T-cell (primary cell): ENCODE measurements at regions of chr14 and their contacts with region 1.

Region 1: DNA sequence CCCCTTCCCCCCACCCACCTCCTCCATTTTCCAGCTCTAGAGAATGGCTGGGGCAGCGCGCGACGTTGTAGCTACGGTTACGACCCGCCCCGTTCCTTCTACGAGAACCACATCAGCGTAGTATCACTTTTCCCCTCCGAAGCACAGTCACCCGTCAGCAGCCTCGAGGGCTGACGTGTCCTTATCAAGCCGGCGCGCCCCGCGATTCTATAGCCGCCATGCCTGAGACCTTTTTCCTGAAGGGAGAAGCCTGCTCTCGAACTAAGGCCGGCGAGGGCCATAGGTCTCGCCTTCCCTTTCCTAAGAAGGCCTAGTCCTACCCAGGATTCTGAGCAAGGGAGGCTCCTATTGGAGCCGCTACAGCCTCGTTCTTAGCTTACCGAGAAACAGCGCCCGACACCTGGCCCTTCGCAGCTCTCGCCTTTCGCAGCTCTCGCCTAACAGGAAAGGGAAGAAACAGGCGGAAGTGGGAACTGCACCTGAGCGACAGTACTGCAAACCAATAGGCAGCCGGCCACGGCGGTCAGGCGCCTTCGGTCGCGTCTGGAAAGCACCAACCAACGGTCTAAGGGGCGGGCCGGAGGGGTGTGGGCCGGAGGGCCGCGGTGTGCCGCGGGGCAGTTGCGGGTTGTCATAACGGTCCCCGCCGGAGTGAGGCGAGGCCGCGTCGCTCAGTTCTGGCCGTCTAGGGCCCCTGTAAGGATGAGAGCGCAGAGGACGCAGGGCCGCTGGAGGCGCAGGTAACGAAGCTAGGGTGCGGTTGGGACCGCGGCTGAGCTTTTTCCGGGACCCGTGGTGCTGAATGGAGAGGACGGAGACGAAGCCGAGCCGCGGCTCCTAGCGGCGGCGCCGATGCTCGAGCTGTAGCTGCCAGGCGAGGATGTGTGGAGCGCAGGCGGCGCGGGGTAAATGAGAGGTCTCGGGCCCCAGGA is at the starts of genes MGAT2 and RPL36AL:
- DNase-seq: peak; percentile 84 to 96 (median 91)
- ATAC-seq: peak; percentile 88 to 91 (median 90)
- H3K4me3 ChIP-seq: peak within 1 kb of the TSS; percentile 74 to 78
- H3K4me3 Mint-ChIP-seq: peak within 1 kb of the TSS; percentile 97 to 99 (median 97)
- H3K27ac ChIP-seq: peak within 1 kb of the TSS; percentile 95
- H3K27ac Mint-ChIP-seq: peak within 1 kb of the TSS; percentile 98 to 99
- H3K4me1 ChIP-seq: peaks cover 20 to 34% of the 10 kb centered on the region in 2 experiments
- H3K4me1 Mint-ChIP-seq: peaks cover 51 to 58% (median 58%) of the 10 kb centered on the region in 3 donors
- H3K27me3 ChIP-seq: no peaks in the 10 kb centered on the region
- H3K27me3 Mint-ChIP-seq: no peaks in the 10 kb centered on the region
- total RNA-seq, gene MGAT2: 21.7 to 54.1 (median 41.6) TPM
- total RNA-seq, gene RPL36AL: 211 to 322 (median 291) TPM

Region 2: GRCh38 chr14:49598485-49599300 is 21.8 kb before region 1 on chr14 and contains the start of gene LRR1:
- CTCF ChIA-PET with region 1: interaction called, 4 to 23 read pairs
- POLR2A ChIA-PET with region 1: interaction called, 18 to 28 read pairs
- DNase-seq: peak; percentile 59 to 91 (median 80)
- ATAC-seq: peak; percentile 81 to 88 (median 85)
- H3K4me3 ChIP-seq: peak within 1 kb of the TSS; percentile 80
- H3K4me3 Mint-ChIP-seq: peak within 1 kb of the TSS; percentile 93 to 98 (median 96)
- H3K27ac ChIP-seq: peak within 1 kb of the TSS; percentile 85
- H3K27ac Mint-ChIP-seq: peak within 1 kb of the TSS; percentile 95 to 98
- H3K4me1 ChIP-seq: peaks cover 6 to 13% of the 10 kb centered on the region in 2 experiments
- H3K4me1 Mint-ChIP-seq: peaks cover 27 to 52% (median 34%) of the 10 kb centered on the region in 3 donors
- H3K27me3 ChIP-seq: no peaks in the 10 kb centered on the region
- H3K27me3 Mint-ChIP-seq: no peaks in the 10 kb centered on the region
- total RNA-seq, gene LRR1: 7.6 to 15.7 (median 11.4) TPM

Region 3: GRCh38 chr14:49767562-49768300 is 147.3 kb after region 1 on chr14 and contains the start of gene KLHDC2:
- CTCF ChIA-PET with region 1: interaction called in 1 of 2 experiments, 16 read pairs
- POLR2A ChIA-PET with region 1: interaction called, 4 to 27 read pairs
- DNase-seq: peak; percentile 78 to 93 (median 86)
- ATAC-seq: peak; percentile 81 to 91 (median 88)
- H3K4me3 ChIP-seq: peak within 1 kb of the TSS; percentile 98 to 99
- H3K4me3 Mint-ChIP-seq: peak within 1 kb of the TSS; percentile 92 to 98 (median 95)
- H3K27ac ChIP-seq: peak within 1 kb of the TSS; percentile 98
- H3K27ac Mint-ChIP-seq: peak within 1 kb of the TSS; percentile 98 to 99
- H3K4me1 ChIP-seq: peaks cover 10 to 32% of the 10 kb centered on the region in 2 experiments
- H3K4me1 Mint-ChIP-seq: peaks cover 33 to 40% (median 38%) of the 10 kb centered on the region in 3 donors
- H3K27me3 ChIP-seq: no peaks in the 10 kb centered on the region
- H3K27me3 Mint-ChIP-seq: no peaks in the 10 kb centered on the region
- total RNA-seq, gene KLHDC2: 69.0 to 115 (median 69.2) TPM

Region 4: GRCh38 chr14:49920935-49921334 is 300.5 kb after region 1 on chr14:
- CTCF ChIA-PET with region 1: no interaction called
- POLR2A ChIA-PET with region 1: no interaction called
- DNase-seq: no peak
- ATAC-seq: no peak
- H3K4me3 ChIP-seq: no peak overlapping the region
- H3K4me3 Mint-ChIP-seq: no peak overlapping the region
- H3K27ac ChIP-seq: no peak overlapping the region
- H3K27ac Mint-ChIP-seq: no peak overlapping the region
- H3K4me1 ChIP-seq: no peaks in the 10 kb centered on the region
- H3K4me1 Mint-ChIP-seq: peaks cover 5 to 25% (median 8%) of the 10 kb centered on the region in 3 donors
- H3K27me3 ChIP-seq: no peaks in the 10 kb centered on the region
- H3K27me3 Mint-ChIP-seq: no peaks in the 10 kb centered on the region